Mammary epithelial cell (primary cell): ENCODE measurements at regions of chr1 and their contacts with region 1.

Region 1: GRCh38 chr1:116934586-116935207 is 25.0 kb downstream of the PTGFRN start:
- DNase-seq: no peak
- H3K4me3 ChIP-seq: no peak overlapping the region
- H3K27ac ChIP-seq: no peak overlapping the region
- H3K4me1 ChIP-seq: no peaks in the 10 kb centered on the region
- H3K27me3 ChIP-seq: no peaks in the 10 kb centered on the region
- CTCF ChIP-seq: peak; percentile 34 to 38

Region 2: DNA sequence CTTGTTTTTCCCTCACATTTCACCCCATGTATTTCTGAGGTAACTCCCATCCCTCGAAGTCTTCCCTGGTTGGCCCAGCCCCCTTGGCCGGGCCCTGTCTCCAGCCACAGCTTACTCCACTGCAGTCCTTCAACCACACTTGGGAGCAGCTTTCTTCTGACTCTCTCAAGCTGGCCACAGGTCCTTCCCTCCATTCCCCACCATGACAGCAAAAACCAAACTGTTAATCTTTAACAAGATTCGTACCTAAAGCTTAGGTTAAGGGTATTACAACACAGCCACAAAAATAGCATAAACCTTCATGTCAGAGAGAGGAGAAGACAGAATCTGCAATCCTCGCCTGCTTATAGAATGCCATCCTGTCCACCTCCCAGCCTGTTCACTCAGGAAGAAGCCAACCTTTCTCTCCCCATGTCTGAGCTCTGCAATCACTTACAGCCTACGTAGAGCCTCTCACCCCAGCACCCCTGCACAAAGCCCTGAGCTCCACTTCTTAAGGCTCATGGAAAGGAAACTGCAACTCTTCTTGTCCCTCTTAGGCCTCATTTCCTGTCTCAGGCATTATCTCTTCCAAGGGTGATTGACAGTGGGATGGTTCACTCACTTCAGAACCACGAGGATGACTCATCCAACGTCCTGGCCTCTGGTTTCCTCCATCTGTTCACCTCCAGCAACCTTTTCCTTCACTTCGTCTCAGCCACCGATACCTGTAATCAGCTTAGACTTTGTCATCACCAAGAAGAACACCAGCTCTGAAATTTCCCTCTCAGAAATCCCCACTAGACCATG is 107.7 kb before region 1 on chr1:
- CTCF ChIA-PET with region 1: no interaction called
- dilution Hi-C with region 1: loop called (anchors 5 kb)
- in situ Hi-C with region 1: no loop called
- intact Hi-C with region 1: no loop called
- DNase-seq: peak; percentile 88
- H3K4me3 ChIP-seq: no peak overlapping the region
- H3K27ac ChIP-seq: no peak overlapping the region
- H3K4me1 ChIP-seq: peaks cover 11% of the 10 kb centered on the region
- H3K27me3 ChIP-seq: no peaks in the 10 kb centered on the region
- CTCF ChIP-seq: no peak

Region 3: DNA sequence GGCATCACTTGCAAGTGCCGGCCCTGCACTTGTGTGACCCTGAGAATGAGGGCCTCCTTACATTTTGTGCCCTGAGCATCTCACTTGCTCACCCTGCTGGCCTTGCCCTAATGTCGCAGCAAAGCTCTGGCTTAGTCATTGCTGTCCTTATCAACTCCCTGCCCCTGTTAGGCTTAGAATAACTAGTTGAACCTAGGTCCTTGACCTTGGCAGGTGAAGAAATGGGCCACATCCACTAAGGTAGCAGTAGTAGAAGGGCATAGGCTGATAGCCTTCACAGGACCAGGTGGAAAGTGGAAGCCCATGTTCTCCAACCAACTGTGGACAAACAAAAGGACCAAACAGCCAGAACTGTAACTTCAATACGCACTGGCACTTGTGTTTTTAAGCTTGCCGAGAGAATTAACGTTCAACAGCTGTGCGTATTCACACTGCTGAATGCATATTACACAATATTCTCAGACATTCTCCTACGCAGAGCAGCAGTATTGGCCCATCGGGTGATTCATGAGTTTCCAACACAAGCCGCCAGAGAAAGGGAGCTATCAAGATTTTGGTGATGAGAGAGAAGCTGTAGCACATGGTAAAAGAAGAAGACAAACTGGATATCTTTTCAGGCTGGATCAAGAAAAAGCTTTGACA is 52.7 kb before region 1 on chr1:
- CTCF ChIA-PET with region 1: no interaction called
- dilution Hi-C with region 1: no loop called
- in situ Hi-C with region 1: no loop called
- intact Hi-C with region 1: loop called (anchors 2 kb)
- DNase-seq: peak; percentile 50
- H3K4me3 ChIP-seq: no peak overlapping the region
- H3K27ac ChIP-seq: no peak overlapping the region
- H3K4me1 ChIP-seq: peaks cover 42% of the 10 kb centered on the region
- H3K27me3 ChIP-seq: no peaks in the 10 kb centered on the region
- CTCF ChIP-seq: peak; percentile 25 to 65

Region 4: GRCh38 chr1:116909510-116910378 is 25.0 kb before region 1 on chr1 and contains the start of gene PTGFRN:
- CTCF ChIA-PET with region 1: no interaction called
- dilution Hi-C with region 1: no loop called
- in situ Hi-C with region 1: no loop called
- intact Hi-C with region 1: loop called (anchors 2 kb)
- DNase-seq: peak; percentile 81
- H3K4me3 ChIP-seq: peak within 1 kb of the TSS; percentile 63 to 82 (median 80)
- H3K27ac ChIP-seq: peak within 1 kb of the TSS; percentile 80
- H3K4me1 ChIP-seq: peaks cover 62% of the 10 kb centered on the region
- H3K27me3 ChIP-seq: no peaks in the 10 kb centered on the region
- CTCF ChIP-seq: no peak
- total RNA-seq, gene PTGFRN: 143 to 150 TPM

Region 5: DNA sequence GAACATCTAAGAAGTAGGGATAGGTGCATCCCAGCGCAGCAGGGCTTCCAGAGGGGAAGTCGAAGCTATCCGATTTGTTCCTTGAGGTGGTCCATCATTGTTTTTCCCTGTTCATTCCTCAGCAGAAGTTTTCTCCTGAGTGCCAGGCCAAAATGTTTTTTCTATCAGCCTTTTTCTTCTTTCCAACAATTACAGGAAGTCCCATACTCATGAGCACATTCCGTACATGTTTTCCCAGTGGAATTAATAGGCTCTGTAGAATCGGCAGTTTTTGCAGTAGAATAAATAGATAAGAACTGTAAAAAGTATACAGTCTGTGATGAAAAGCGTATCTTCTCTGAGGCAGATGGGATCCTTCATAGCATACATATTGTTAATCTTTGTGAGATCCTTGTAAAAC is 91.7 kb after region 1 on chr1:
- CTCF ChIA-PET with region 1: no interaction called
- dilution Hi-C with region 1: loop called (anchors 5 kb)
- in situ Hi-C with region 1: no loop called
- intact Hi-C with region 1: no loop called
- DNase-seq: no peak
- H3K4me3 ChIP-seq: no peak overlapping the region
- H3K27ac ChIP-seq: no peak overlapping the region
- H3K4me1 ChIP-seq: no peaks in the 10 kb centered on the region
- H3K27me3 ChIP-seq: no peaks in the 10 kb centered on the region
- CTCF ChIP-seq: no peak